B cell (primary cell): ENCODE measurements at regions of chr6 and their contacts with region 1.

Region 1: DNA sequence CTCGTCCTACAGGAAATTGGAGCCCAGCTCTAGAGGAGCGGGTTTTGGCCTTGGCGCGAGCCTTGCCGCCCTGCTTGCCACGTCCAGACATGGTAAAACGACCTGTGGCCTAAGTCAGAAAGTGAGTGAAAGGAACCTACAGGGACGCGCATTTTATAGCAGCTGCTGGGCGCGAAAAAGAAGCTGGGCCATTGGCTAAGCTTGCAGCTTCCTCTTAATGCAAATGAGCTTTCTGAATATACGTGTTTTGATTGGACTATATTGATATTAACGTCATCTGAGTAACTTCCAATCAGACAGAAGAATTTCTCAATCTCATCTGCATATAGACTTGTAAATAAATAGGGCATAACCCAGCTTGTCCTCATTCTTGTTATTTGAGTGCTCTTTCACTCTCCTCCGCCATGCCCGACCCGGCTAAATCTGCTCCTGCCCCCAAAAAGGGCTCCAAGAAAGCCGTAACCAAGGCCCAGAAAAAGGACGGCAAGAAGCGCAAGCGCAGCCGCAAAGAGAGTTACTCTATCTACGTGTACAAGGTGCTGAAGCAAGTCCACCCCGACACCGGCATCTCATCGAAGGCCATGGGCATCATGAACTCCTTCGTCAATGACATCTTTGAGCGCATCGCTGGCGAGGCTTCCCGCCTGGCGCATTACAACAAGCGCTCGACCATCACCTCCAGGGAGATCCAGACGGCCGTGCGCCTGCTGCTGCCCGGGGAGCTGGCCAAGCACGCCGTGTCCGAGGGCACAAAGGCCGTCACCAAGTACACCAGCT is 18.9 kb downstream of the OR2B2 start:
- DNase-seq: peak; percentile 97
- ATAC-seq: peak; percentile 67
- H3K4me3 ChIP-seq: peak overlapping the region; percentile 68 to 100 (median 88)
- H3K4me3 Mint-ChIP-seq: no peak overlapping the region
- H3K27ac ChIP-seq: peak overlapping the region; percentile 76 to 77
- H3K27ac Mint-ChIP-seq: no peak overlapping the region
- H3K4me1 ChIP-seq: peaks cover 18 to 38% of the 10 kb centered on the region in 2 donors
- H3K4me1 Mint-ChIP-seq: peaks cover 36% of the 10 kb centered on the region
- H3K27me3 ChIP-seq: no peaks in the 10 kb centered on the region
- H3K27me3 Mint-ChIP-seq: no peaks in the 10 kb centered on the region
- CTCF ChIP-seq: no peak

Region 2: GRCh38 chr6:26322645-26323482 is 1570.4 kb before region 1 on chr6:
- CTCF ChIA-PET with region 1: no interaction called
- POLR2A ChIA-PET with region 1: no interaction called
- intact Hi-C with region 1: loop called (anchors 5 kb)
- DNase-seq: peak; percentile 83
- ATAC-seq: peak; percentile 59
- H3K4me3 ChIP-seq: peak overlapping the region in 4 of 5 experiments; percentile 49 to 74 (median 59)
- H3K4me3 Mint-ChIP-seq: peak overlapping the region; percentile 74
- H3K27ac ChIP-seq: no peak overlapping the region
- H3K27ac Mint-ChIP-seq: peak overlapping the region; percentile 70
- H3K4me1 ChIP-seq: peaks cover 14 to 31% of the 10 kb centered on the region in 2 donors
- H3K4me1 Mint-ChIP-seq: peaks cover 22% of the 10 kb centered on the region
- H3K27me3 ChIP-seq: peaks cover 0 to 43% (median 25%) of the 10 kb centered on the region in 4 experiments
- H3K27me3 Mint-ChIP-seq: peaks cover 26% of the 10 kb centered on the region
- CTCF ChIP-seq: no peak

Region 3: GRCh38 chr6:27177485-27178406 is 715.5 kb before region 1 on chr6:
- CTCF ChIA-PET with region 1: interaction called, 30 read pairs
- POLR2A ChIA-PET with region 1: interaction called, 13 read pairs
- intact Hi-C with region 1: loop called (anchors 1 kb)
- DNase-seq: peak; percentile 90
- ATAC-seq: peak; percentile 86
- H3K4me3 ChIP-seq: peak overlapping the region; percentile 88 to 100 (median 98)
- H3K4me3 Mint-ChIP-seq: peak overlapping the region; percentile 96
- H3K27ac ChIP-seq: peak overlapping the region; percentile 34 to 78
- H3K27ac Mint-ChIP-seq: peak overlapping the region; percentile 91
- H3K4me1 ChIP-seq: peaks cover 0 to 7% of the 10 kb centered on the region in 2 donors
- H3K4me1 Mint-ChIP-seq: peaks cover 15% of the 10 kb centered on the region
- H3K27me3 ChIP-seq: no peaks in the 10 kb centered on the region
- H3K27me3 Mint-ChIP-seq: no peaks in the 10 kb centered on the region
- CTCF ChIP-seq: peak; percentile 71

Region 4: GRCh38 chr6:27518881-27519795 is 374.1 kb before region 1 on chr6:
- CTCF ChIA-PET with region 1: interaction called, 44 read pairs
- POLR2A ChIA-PET with region 1: no interaction called
- intact Hi-C with region 1: loop called (anchors 1 kb)
- DNase-seq: peak; percentile 87
- ATAC-seq: peak; percentile 67
- H3K4me3 ChIP-seq: peak overlapping the region; percentile 67 to 89 (median 76)
- H3K4me3 Mint-ChIP-seq: peak overlapping the region; percentile 85
- H3K27ac ChIP-seq: peak overlapping the region; percentile 52 to 69
- H3K27ac Mint-ChIP-seq: peak overlapping the region; percentile 70
- H3K4me1 ChIP-seq: peaks cover 8 to 19% of the 10 kb centered on the region in 2 donors
- H3K4me1 Mint-ChIP-seq: peaks cover 15% of the 10 kb centered on the region
- H3K27me3 ChIP-seq: peaks cover 0 to 18% (median 10%) of the 10 kb centered on the region in 4 experiments
- H3K27me3 Mint-ChIP-seq: peaks cover 22% of the 10 kb centered on the region
- CTCF ChIP-seq: peak; percentile 80

Region 5: GRCh38 chr6:27795697-27796494 is 97.4 kb before region 1 on chr6:
- CTCF ChIA-PET with region 1: interaction called, 16 read pairs
- POLR2A ChIA-PET with region 1: interaction called, 4 read pairs
- intact Hi-C with region 1: loop called (anchors 1 kb)
- DNase-seq: peak; percentile 89
- ATAC-seq: peak; percentile 59
- H3K4me3 ChIP-seq: no peak overlapping the region
- H3K4me3 Mint-ChIP-seq: no peak overlapping the region
- H3K27ac ChIP-seq: no peak overlapping the region
- H3K27ac Mint-ChIP-seq: peak overlapping the region; percentile 17
- H3K4me1 ChIP-seq: peaks cover 19 to 25% of the 10 kb centered on the region in 2 donors
- H3K4me1 Mint-ChIP-seq: peaks cover 22% of the 10 kb centered on the region
- H3K27me3 ChIP-seq: peaks cover 0 to 10% (median 5%) of the 10 kb centered on the region in 4 experiments
- H3K27me3 Mint-ChIP-seq: peaks cover 12% of the 10 kb centered on the region
- CTCF ChIP-seq: peak; percentile 84

Region 6: GRCh38 chr6:27847706-27848105 is 45.5 kb before region 1 on chr6:
- CTCF ChIA-PET with region 1: no interaction called
- POLR2A ChIA-PET with region 1: no interaction called
- intact Hi-C with region 1: no loop called
- DNase-seq: no peak
- ATAC-seq: no peak
- H3K4me3 ChIP-seq: no peak overlapping the region
- H3K4me3 Mint-ChIP-seq: no peak overlapping the region
- H3K27ac ChIP-seq: no peak overlapping the region
- H3K27ac Mint-ChIP-seq: no peak overlapping the region
- H3K4me1 ChIP-seq: no peaks in the 10 kb centered on the region
- H3K4me1 Mint-ChIP-seq: no peaks in the 10 kb centered on the region
- H3K27me3 ChIP-seq: no peaks in the 10 kb centered on the region
- H3K27me3 Mint-ChIP-seq: no peaks in the 10 kb centered on the region
- CTCF ChIP-seq: no peak

Region 7: GRCh38 chr6:27908017-27908416 is 14.8 kb after region 1 on chr6:
- CTCF ChIA-PET with region 1: interaction called, 10 read pairs
- POLR2A ChIA-PET with region 1: interaction called, 14 read pairs
- intact Hi-C with region 1: no loop called
- DNase-seq: no peak
- ATAC-seq: no peak
- H3K4me3 ChIP-seq: no peak overlapping the region
- H3K4me3 Mint-ChIP-seq: no peak overlapping the region
- H3K27ac ChIP-seq: no peak overlapping the region
- H3K27ac Mint-ChIP-seq: no peak overlapping the region
- H3K4me1 ChIP-seq: peaks cover 0 to 5% of the 10 kb centered on the region in 2 donors
- H3K4me1 Mint-ChIP-seq: peaks cover 3% of the 10 kb centered on the region
- H3K27me3 ChIP-seq: no peaks in the 10 kb centered on the region
- H3K27me3 Mint-ChIP-seq: peaks cover 11% of the 10 kb centered on the region
- CTCF ChIP-seq: no peak